WTC11 (cell line): ENCODE measurements at regions of chrX and their contacts with region 1.

Region 1: DNA sequence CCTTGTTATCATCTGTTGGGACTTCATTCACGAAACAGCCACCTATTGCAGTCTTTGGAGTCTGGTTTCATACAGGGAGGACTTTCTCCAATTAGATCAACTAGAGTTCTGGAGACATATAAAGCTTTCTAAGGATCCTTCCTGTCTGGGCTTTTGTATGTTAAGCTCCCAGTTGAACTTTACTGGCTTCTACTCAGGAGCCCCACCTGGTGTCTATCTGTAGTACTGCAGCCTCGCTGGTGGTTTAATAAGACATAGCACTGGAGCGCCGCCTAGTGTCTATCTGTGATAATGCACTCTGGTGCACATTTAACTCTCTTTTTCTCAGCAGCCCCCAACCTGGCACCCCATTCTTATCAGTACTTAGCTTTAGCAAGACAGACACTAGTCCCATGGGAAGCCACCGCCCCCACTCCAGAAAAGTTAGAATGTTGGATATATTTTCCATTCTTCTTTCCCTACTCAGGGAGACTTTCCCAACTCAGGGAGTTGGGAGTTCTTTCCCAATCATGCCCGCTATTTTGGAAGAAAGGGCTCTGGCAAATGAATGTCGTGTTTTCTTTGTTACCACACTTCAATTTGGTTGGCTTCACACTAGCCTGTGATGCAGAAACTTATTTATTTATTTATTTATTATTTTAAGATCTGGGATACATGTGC is 36.9 kb upstream of the SYTL4 start:
- DNase-seq: peak; percentile 84
- ATAC-seq: peak; percentile 59
- H3K4me3 Mint-ChIP-seq: no peak overlapping the region
- H3K27ac Mint-ChIP-seq: no peak overlapping the region
- H3K4me1 Mint-ChIP-seq: peaks cover 2% of the 10 kb centered on the region; the same call in 1 of the 2 replicates
- H3K27me3 Mint-ChIP-seq: peaks cover 5% of the 10 kb centered on the region
- CTCF ChIP-seq: peak; percentile 98

Region 2: DNA sequence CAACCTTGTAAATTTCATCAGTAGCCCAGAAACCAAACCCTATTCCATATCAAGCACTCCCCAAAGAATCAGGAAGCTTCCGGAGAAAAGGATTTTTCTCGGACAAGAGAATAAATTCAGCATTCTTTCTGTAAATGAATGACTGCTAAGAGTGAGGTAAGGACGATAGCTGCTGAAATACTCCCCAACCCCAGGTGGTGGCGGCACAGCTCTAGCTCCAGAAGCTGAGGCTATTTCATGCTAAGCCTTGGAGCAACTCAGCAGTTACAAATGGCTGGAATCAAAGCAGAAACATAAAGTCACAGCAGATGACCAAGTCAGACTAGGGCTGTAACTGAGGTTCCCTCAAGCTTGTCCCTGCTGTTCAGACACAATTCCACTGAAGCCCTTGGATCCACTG is 344.8 kb before region 1 on chrX:
- CTCF ChIA-PET with region 1: interaction called, 11 read pairs
- POLR2A ChIA-PET with region 1: no interaction called
- DNase-seq: peak; percentile 42
- ATAC-seq: peak; percentile 86
- H3K4me3 Mint-ChIP-seq: no peak overlapping the region
- H3K27ac Mint-ChIP-seq: no peak overlapping the region
- H3K4me1 Mint-ChIP-seq: peaks cover 6% of the 10 kb centered on the region
- H3K27me3 Mint-ChIP-seq: peaks cover 3% of the 10 kb centered on the region; the same call in 1 of the 2 replicates
- CTCF ChIP-seq: no peak

Region 3: GRCh38 chrX:100674705-100675104 is 94.1 kb before region 1 on chrX:
- CTCF ChIA-PET with region 1: interaction called, 94 read pairs
- POLR2A ChIA-PET with region 1: no interaction called
- DNase-seq: no peak
- ATAC-seq: no peak
- H3K4me3 Mint-ChIP-seq: no peak overlapping the region
- H3K27ac Mint-ChIP-seq: no peak overlapping the region
- H3K4me1 Mint-ChIP-seq: peaks cover 11% of the 10 kb centered on the region; the same call in 1 of the 2 replicates
- H3K27me3 Mint-ChIP-seq: no peaks in the 10 kb centered on the region
- CTCF ChIP-seq: no peak

Region 4: DNA sequence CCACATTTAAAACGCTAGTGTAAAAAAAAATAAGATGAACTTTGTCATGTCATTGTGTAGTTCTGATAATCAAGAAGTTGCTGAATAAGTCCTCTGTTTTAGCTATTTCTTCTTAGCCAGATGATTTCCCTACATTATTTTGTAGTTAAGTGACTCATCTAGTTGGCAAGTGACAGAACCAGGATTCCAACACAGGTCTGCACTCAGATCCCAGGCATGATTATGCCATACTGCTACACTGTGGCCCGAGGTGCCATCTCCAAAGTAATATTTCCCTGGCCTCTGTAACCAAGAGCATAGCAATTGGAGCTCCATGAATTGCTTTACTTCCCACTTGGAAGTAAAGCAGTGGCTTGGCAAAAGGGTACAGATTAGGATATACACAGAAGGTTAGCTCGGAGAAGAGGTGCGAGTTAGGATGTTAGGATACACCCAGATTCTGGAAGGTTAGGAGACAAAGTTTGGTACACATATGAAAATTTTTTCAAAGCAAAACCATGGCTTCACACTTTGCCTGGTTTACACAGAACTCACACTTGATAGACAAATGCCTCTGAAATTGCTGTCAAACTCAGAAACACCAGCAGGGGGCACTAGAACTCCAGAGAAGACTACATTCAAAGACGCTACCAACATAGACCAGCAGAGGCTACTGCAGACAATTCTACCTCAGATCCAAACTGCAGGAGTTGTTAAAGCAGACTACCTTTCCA is 83.4 kb before region 1 on chrX:
- CTCF ChIA-PET with region 1: interaction called, 167 read pairs
- POLR2A ChIA-PET with region 1: no interaction called
- DNase-seq: peak; percentile 67
- ATAC-seq: peak; percentile 76
- H3K4me3 Mint-ChIP-seq: no peak overlapping the region
- H3K27ac Mint-ChIP-seq: no peak overlapping the region
- H3K4me1 Mint-ChIP-seq: no peaks in the 10 kb centered on the region
- H3K27me3 Mint-ChIP-seq: no peaks in the 10 kb centered on the region; the same call in 1 of the 2 replicates
- CTCF ChIP-seq: peak; percentile 51

Region 5: DNA sequence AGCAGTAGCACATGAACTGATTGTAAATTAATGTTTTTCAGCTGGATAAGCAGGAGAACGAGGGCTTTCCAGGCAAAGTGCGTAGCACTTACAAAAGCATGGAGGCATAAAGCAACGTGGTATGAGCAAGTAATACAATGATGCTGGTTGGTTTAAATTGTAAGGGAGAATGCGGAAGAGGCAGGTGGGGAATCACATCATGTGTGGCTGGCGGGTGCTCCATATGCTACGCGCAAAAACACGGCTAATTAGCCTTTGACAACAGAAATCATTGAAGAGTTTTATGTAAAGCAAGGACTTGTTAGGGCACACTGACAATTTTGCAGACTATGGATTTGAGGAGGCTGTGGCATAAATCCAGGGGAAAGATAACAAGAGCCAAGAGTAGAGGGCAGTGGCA is 51.4 kb before region 1 on chrX:
- CTCF ChIA-PET with region 1: interaction called, 13 read pairs
- POLR2A ChIA-PET with region 1: no interaction called
- DNase-seq: no peak
- ATAC-seq: no peak
- H3K4me3 Mint-ChIP-seq: no peak overlapping the region
- H3K27ac Mint-ChIP-seq: no peak overlapping the region
- H3K4me1 Mint-ChIP-seq: no peaks in the 10 kb centered on the region
- H3K27me3 Mint-ChIP-seq: no peaks in the 10 kb centered on the region; the same call in 1 of the 2 replicates
- CTCF ChIP-seq: no peak

Region 6: GRCh38 chrX:100731441-100732281 is 37.1 kb before region 1 on chrX and contains the start of gene SYTL4:
- CTCF ChIA-PET with region 1: interaction called, 23 read pairs
- POLR2A ChIA-PET with region 1: no interaction called
- DNase-seq: peak; percentile 47
- ATAC-seq: peak; percentile 87
- H3K4me3 Mint-ChIP-seq: peak within 1 kb of the TSS; percentile 73
- H3K27ac Mint-ChIP-seq: no peak within 1 kb of the TSS
- H3K4me1 Mint-ChIP-seq: no peaks in the 10 kb centered on the region
- H3K27me3 Mint-ChIP-seq: peaks cover 75% of the 10 kb centered on the region
- CTCF ChIP-seq: no peak
- total RNA-seq, gene SYTL4: 0.16 to 0.31 TPM (median 0.27 TPM) in 3 replicates

Region 7: DNA sequence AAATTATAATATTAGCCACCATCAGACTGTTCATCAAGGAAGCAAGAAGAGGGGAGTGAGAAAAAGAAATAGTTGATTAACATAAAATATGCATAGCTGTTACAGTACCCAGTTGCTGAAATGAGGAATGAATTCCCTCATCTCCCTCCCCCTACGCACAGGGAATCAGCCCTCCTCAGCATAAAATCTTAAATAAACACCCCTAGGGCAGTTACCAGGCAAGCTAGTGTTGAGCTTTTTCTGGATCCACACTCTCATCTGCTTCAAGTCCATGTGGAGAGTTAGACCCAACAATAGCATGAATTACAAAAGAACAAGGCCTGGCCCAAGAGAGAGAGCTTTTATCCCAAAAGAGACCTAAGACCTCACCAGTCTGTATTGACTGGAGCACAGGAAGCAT is 17.9 kb before region 1 on chrX:
- CTCF ChIA-PET with region 1: interaction called, 10 read pairs
- POLR2A ChIA-PET with region 1: no interaction called
- DNase-seq: no peak
- ATAC-seq: no peak
- H3K4me3 Mint-ChIP-seq: no peak overlapping the region
- H3K27ac Mint-ChIP-seq: no peak overlapping the region
- H3K4me1 Mint-ChIP-seq: peaks cover 7% of the 10 kb centered on the region
- H3K27me3 Mint-ChIP-seq: no peaks in the 10 kb centered on the region; the same call in 1 of the 2 replicates
- CTCF ChIP-seq: no peak